Activated naive CD4-positive, alpha-beta T cell treated with anti-CD3 and anti-CD28 coated beads, Interleukin-2, amount 10 ng/mL, durations not matched to agents 7 days and 5 days (primary cell): ENCODE measurements at regions of chr2 and their contacts with region 1.

Region 1: GRCh38 chr2:9799665-9800632 is 43.3 kb upstream of the TAF1B start:
- DNase-seq: peak; percentile 92
- H3K4me3 Mint-ChIP-seq: peak overlapping the region; percentile 57
- H3K27ac Mint-ChIP-seq: peak overlapping the region; percentile 88
- H3K4me1 Mint-ChIP-seq: peaks cover 42% of the 10 kb centered on the region
- H3K27me3 Mint-ChIP-seq: peaks cover 49% of the 10 kb centered on the region

Region 2: DNA sequence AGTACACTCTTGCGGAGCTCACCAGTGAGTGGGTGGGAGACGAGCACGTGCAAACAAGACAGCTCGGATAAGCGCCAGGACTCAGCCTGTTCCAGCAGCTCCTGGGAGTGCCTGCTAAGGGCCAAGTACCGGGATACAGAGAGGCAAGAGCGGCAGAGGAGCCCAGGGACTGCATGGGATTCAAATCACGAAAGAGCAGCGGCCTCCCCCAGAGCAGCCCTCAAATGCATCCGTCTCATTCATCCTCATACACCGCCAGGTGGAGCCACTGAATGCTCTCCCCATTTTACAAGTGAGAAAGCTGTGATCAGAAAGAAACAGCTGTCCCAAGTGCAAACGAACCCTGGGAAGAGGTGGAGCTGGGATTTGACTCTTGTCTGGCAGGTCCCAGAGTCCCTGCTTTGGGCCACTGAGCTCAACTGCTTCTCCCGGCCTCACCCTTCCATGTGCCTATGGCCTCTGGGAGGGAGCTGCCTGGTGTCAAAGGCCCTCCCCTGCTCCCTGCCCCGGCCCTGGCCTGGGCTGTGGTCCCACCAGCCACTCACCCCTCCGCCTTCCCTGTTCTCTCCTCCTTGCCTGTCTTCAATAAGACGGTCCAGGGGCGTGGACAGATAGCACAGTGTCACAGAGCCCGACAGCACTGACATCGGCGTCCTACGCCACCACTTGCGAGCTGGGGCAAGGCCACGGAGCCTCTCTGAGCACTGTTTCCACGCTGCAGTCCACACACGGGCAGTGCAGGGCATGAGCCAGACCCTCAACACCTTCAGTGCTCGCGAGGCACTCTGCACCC is 29.4 kb before region 1 on chr2:
- CTCF ChIA-PET with region 1: interaction called, 46 read pairs
- DNase-seq: peak; percentile 73
- H3K4me3 Mint-ChIP-seq: no peak overlapping the region
- H3K27ac Mint-ChIP-seq: peak overlapping the region; percentile 24
- H3K4me1 Mint-ChIP-seq: peaks cover 8% of the 10 kb centered on the region
- H3K27me3 Mint-ChIP-seq: peaks cover 67% of the 10 kb centered on the region

Region 3: GRCh38 chr2:9778012-9778411 is 21.9 kb before region 1 on chr2:
- CTCF ChIA-PET with region 1: interaction called, 46 read pairs
- DNase-seq: no peak
- H3K4me3 Mint-ChIP-seq: no peak overlapping the region
- H3K27ac Mint-ChIP-seq: no peak overlapping the region
- H3K4me1 Mint-ChIP-seq: peaks cover 55% of the 10 kb centered on the region
- H3K27me3 Mint-ChIP-seq: peaks cover 33% of the 10 kb centered on the region

Region 4: GRCh38 chr2:9789371-9789968 is 10.5 kb before region 1 on chr2:
- CTCF ChIA-PET with region 1: interaction called, 35 read pairs
- DNase-seq: no peak
- H3K4me3 Mint-ChIP-seq: no peak overlapping the region
- H3K27ac Mint-ChIP-seq: no peak overlapping the region
- H3K4me1 Mint-ChIP-seq: peaks cover 24% of the 10 kb centered on the region
- H3K27me3 Mint-ChIP-seq: peaks cover 34% of the 10 kb centered on the region

Region 5: GRCh38 chr2:9824956-9825720 is 25.2 kb after region 1 on chr2:
- CTCF ChIA-PET with region 1: no interaction called
- DNase-seq: no peak
- H3K4me3 Mint-ChIP-seq: no peak overlapping the region
- H3K27ac Mint-ChIP-seq: no peak overlapping the region
- H3K4me1 Mint-ChIP-seq: peaks cover 5% of the 10 kb centered on the region
- H3K27me3 Mint-ChIP-seq: peaks cover 51% of the 10 kb centered on the region

Region 6: GRCh38 chr2:10043906-10044601 is 244.1 kb after region 1 on chr2:
- CTCF ChIA-PET with region 1: interaction called, 64 read pairs
- DNase-seq: peak; percentile 92
- H3K4me3 Mint-ChIP-seq: peak overlapping the region; percentile 62
- H3K27ac Mint-ChIP-seq: peak overlapping the region; percentile 89
- H3K4me1 Mint-ChIP-seq: peaks cover 34% of the 10 kb centered on the region
- H3K27me3 Mint-ChIP-seq: peaks cover 64% of the 10 kb centered on the region